ENCODE measurements at regions of chr20 and their contacts with region 1.

Region 1: GRCh38 chr20:44475694-44476560 is at the start of gene TTPAL:
- DNase-seq: peak; percentile 81 to 88
- ATAC-seq: peak; percentile 98
- H3K4me3 ChIP-seq: peak within 1 kb of the TSS; percentile 92
- H3K27ac ChIP-seq: peak within 1 kb of the TSS; percentile 91 to 95
- H3K4me1 ChIP-seq: peaks cover 12% of the 10 kb centered on the region; the same call in 2 of the 3 replicates
- CTCF ChIP-seq: peak; percentile 20; the same call in 2 of the 3 replicates
- EP300 ChIP-seq: no peak
- POLR2A ChIP-seq: peak; percentile 99
- RAD21 ChIP-seq: peak; percentile 9 to 48; a peak in 2 of 5 replicates
- polyA plus RNA-seq, gene TTPAL: 9.2 and 11.0 TPM in 2 replicates

Region 2: DNA sequence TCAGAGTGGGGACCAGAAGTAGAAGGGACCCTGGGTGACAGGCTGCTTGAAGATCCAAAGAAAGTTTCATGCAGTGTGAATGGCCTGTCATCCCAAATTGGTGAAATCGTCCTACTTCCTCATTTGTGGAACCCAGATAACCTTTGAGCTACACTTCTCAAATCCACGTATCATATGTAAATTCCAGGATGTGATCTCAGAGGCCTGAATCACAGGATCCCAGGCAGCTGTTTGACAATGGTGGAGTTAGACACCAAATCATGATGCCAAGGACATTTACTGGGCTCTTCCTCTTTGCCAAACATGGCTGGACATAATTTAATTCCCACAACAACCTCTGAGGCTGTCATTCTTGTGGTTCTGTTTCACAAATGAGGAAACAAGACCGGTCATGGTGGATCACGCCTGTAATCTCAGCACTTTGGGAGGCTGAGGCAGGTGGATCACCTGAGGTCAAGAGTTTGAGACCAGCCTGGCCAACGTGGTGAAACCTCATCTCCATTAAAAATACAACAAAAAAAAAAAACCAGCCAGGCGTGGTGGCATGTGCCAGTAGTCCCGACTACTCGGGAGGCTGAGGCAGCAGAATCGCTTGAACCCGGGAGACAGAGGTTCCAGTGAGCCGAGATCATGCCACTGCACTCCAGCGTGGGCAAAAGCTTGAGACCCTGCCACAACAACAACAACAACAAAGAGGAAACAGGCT is 40.1 kb before region 1 on chr20:
- CTCF ChIA-PET with region 1: no interaction called
- POLR2A ChIA-PET with region 1: no interaction called
- DNase-seq: peak in 1 of 2 experiments; percentile 52
- ATAC-seq: peak; percentile 23 to 30; a peak in 3 of 6 replicates
- H3K4me3 ChIP-seq: no peak overlapping the region
- H3K27ac ChIP-seq: peak overlapping the region; percentile 27 to 34; a peak in 2 of 6 replicates
- H3K4me1 ChIP-seq: peaks cover 6% of the 10 kb centered on the region
- CTCF ChIP-seq: no peak
- EP300 ChIP-seq: no peak
- POLR2A ChIP-seq: no peak
- RAD21 ChIP-seq: no peak

Region 3: GRCh38 chr20:44521484-44522481 is 45.9 kb after region 1 on chr20 and contains the start of gene SERINC3:
- CTCF ChIA-PET with region 1: interaction called, 5 read pairs
- POLR2A ChIA-PET with region 1: interaction called, 10 read pairs
- DNase-seq: peak; percentile 94 to 95
- ATAC-seq: peak; percentile 99
- H3K4me3 ChIP-seq: peak within 1 kb of the TSS; percentile 100
- H3K27ac ChIP-seq: peak within 1 kb of the TSS; percentile 94 to 97
- H3K4me1 ChIP-seq: peaks cover 21% of the 10 kb centered on the region
- CTCF ChIP-seq: peak; percentile 52
- EP300 ChIP-seq: no peak
- POLR2A ChIP-seq: peak; percentile 63
- RAD21 ChIP-seq: peak in 1 of 2 experiments; percentile 38; a peak in 2 of 5 replicates
- polyA plus RNA-seq, gene SERINC3: 159 and 173 TPM in 2 replicates